ENCODE measurements at regions of chr16 and their contacts with region 1.

Region 1: GRCh38 chr16:9817586-9817985 is 364.6 kb downstream of the GRIN2A start:
- DNase-seq: no peak
- ATAC-seq: no peak
- H3K4me3 ChIP-seq: no peak overlapping the region
- H3K27ac ChIP-seq: no peak overlapping the region
- H3K4me1 ChIP-seq: no peaks in the 10 kb centered on the region
- H3K27me3 ChIP-seq: peaks cover 0 to 6% of the 10 kb centered on the region in 2 experiments; a peak in 2 of 5 replicates
- CTCF ChIP-seq: no peak
- EP300 ChIP-seq: no peak
- POLR2A ChIP-seq: no peak
- RAD21 ChIP-seq: no peak

Region 2: GRCh38 chr16:9766891-9767290 is 50.7 kb before region 1 on chr16:
- CTCF ChIA-PET with region 1: no interaction called
- POLR2A ChIA-PET with region 1: no interaction called
- in situ Hi-C with region 1: loop called (anchors 5 kb)
- intact Hi-C with region 1: no loop called
- DNase-seq: no peak
- ATAC-seq: no peak
- H3K4me3 ChIP-seq: no peak overlapping the region
- H3K27ac ChIP-seq: no peak overlapping the region
- H3K4me1 ChIP-seq: no peaks in the 10 kb centered on the region
- H3K27me3 ChIP-seq: peaks cover 0 to 26% of the 10 kb centered on the region in 2 experiments; a peak in 3 of 5 replicates
- CTCF ChIP-seq: no peak
- EP300 ChIP-seq: no peak
- POLR2A ChIP-seq: no peak
- RAD21 ChIP-seq: no peak

Measured in HepG2 (cell line).